ENCODE measurements at regions of chr17 and their contacts with region 1.

Region 1: GRCh38 chr17:46942441-46943217 is 19.7 kb downstream of the GOSR2 start:
- DNase-seq: peak; percentile 75 to 88
- ATAC-seq: peak; percentile 76
- H3K4me3 ChIP-seq: no peak overlapping the region
- H3K27ac ChIP-seq: no peak overlapping the region
- H3K4me1 ChIP-seq: no peaks in the 10 kb centered on the region
- H3K27me3 ChIP-seq: no peaks in the 10 kb centered on the region

Region 2: DNA sequence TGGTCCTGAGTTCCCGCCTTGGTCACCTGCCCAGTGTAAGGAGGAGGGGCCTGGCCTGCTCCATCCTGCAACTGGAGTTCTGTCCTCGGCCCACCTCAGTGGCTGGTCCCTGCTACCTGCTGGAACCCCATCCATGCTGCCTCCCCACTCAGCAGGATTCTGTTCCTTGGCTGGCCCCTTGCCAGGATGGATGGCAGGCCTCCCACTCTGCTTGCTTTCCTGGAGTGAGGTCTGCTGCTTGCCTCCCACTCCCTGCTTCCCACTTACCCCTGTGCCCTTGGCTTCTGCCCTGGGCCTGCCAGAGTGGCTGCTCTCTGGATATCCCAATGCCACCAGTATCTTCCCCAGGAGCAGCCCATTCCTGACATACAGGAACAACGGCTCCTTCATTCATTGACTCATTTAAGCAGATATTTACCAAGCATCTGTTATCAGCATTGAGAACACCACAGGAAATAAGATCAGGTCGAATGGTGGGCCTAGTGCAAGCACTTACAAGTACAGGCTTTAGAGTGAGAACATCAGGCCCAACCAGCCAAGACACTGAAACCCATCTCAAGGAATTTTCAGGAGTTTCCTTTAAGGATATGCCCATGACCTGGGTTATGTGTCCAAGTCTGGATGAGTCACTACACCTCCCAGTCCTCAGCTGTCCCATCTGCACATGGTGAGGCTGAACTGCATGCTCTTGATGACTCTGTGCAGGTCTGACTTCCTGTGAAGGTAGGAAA is 53.4 kb after region 1 on chr17:
- intact Hi-C with region 1: loop called (anchors 2 to 5 kb)
- DNase-seq: no peak
- ATAC-seq: no peak
- H3K4me3 ChIP-seq: no peak overlapping the region
- H3K27ac ChIP-seq: no peak overlapping the region
- H3K4me1 ChIP-seq: no peaks in the 10 kb centered on the region
- H3K27me3 ChIP-seq: no peaks in the 10 kb centered on the region

Measured in aorta (tissue), 5 donors.